Caco-2 (cell line): ENCODE measurements at regions of chr6 and their contacts with region 1.

Region 1: DNA sequence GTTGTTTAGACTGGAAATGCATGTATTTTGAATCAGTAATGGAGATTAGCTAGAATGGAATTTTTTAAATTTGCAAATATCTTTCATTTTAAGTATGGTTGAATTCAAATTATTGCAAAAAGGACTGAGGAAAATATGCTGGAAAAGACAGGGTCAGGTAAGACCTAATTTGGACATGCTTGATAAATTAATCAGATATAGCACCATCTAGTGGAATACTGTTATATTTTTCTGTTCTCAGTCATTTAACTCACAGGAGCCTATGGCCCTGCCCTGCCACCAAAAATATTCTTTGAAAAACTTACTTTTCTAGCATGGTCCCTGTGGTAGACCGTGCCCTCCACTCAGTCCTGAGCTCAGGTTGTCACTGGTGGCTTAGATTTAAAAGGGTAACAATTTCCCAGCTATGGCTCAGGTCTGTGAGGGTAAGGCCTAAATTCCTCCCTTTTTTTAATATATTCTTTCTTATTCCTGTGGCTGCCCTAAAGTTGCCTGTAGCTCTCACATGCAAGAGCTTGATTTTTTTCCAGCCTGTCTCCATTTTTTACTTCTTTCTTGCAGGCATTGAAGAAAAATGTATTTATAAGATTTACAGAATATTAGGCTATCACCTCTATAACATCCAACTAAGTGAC is 25.3 kb upstream of the KIAA1586 start:
- DNase-seq: peak in 1 of 2 experiments; percentile 8
- H3K4me3 ChIP-seq: no peak overlapping the region
- H3K4me3 Mint-ChIP-seq: no peak overlapping the region
- H3K27ac Mint-ChIP-seq: no peak overlapping the region
- H3K4me1 ChIP-seq: no peaks in the 10 kb centered on the region
- H3K4me1 Mint-ChIP-seq: no peaks in the 10 kb centered on the region
- H3K27me3 ChIP-seq: no peaks in the 10 kb centered on the region
- H3K27me3 Mint-ChIP-seq: peaks cover 8% of the 10 kb centered on the region
- CTCF ChIP-seq: peak; percentile 25 to 51

Region 2: DNA sequence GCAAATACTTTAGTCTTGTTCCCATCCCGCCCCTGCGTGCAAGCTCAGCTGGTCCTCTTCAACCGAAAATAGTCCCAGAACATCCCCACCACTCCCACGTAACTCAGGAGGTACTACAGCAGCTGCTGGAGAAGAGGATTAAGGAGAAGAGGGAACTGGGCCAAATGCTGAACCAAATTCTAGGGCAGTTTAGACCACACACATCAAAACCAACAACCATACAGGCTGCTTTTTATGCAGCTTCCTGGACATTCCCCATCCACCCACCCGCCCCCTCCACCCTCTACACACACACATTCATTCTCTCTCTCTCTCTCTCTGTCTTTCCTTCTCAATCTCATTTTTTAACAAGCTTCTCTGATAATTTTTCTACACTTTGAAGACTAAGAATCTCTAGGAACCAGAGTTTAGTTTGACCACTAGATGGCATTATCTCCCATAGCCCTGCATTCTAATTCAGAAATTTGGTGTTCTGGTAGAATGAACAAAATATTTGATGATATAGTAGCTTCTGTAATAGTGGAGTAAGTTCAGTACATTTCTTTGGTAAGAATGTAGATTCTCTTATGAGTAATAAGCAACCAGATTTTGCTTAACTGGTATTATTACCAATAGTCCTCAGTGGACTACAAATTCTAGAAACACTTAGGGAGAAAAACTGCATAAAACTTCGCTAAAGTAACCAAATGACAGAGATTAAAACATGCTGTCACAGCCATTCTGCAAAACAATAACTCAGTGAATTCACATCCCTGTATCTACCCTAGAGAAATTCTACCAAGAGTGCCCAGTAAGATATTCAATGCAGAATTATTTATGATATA is 118.3 kb before region 1 on chr6:
- CTCF ChIA-PET with region 1: interaction called, 4 read pairs
- POLR2A ChIA-PET with region 1: no interaction called
- intact Hi-C with region 1: loop called (anchors 1 kb)
- DNase-seq: peak in 1 of 2 experiments; percentile 13
- H3K4me3 ChIP-seq: no peak overlapping the region
- H3K4me3 Mint-ChIP-seq: peak overlapping the region; percentile 0
- H3K27ac Mint-ChIP-seq: no peak overlapping the region
- H3K4me1 ChIP-seq: 0 out of 2 replicates have a peak, but pooled peaks cover 6% of the 10 kb centered on the region
- H3K4me1 Mint-ChIP-seq: peaks cover 22% of the 10 kb centered on the region
- H3K27me3 ChIP-seq: no peaks in the 10 kb centered on the region
- H3K27me3 Mint-ChIP-seq: peaks cover 2% of the 10 kb centered on the region
- CTCF ChIP-seq: peak; percentile 67

Region 3: DNA sequence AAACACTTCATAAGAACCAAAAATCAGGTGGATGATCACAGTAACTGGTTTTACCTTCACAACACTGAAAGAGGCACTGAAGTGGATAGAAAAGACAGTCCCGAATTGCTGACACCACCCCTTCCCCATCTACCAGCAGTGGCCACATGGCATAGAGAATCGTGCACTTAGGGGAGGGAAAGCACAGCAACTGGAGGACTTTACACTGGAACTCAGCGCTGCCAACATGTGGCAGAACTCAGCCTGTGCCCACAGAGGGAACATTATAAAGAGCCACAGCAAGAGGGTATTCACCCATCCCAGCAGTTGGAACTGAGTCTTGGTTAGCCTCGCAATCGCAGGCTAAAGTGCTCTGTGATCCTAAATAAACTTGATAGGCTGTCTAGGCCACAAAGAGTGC is 18.8 kb after region 1 on chr6:
- CTCF ChIA-PET with region 1: no interaction called
- POLR2A ChIA-PET with region 1: no interaction called
- intact Hi-C with region 1: no loop called
- DNase-seq: no peak
- H3K4me3 ChIP-seq: no peak overlapping the region
- H3K4me3 Mint-ChIP-seq: no peak overlapping the region
- H3K27ac Mint-ChIP-seq: no peak overlapping the region
- H3K4me1 ChIP-seq: no peaks in the 10 kb centered on the region
- H3K4me1 Mint-ChIP-seq: no peaks in the 10 kb centered on the region
- H3K27me3 ChIP-seq: no peaks in the 10 kb centered on the region
- H3K27me3 Mint-ChIP-seq: peaks cover 16% of the 10 kb centered on the region
- CTCF ChIP-seq: no peak

Region 4: GRCh38 chr6:57257911-57258541 is 236.8 kb after region 1 on chr6:
- CTCF ChIA-PET with region 1: no interaction called
- POLR2A ChIA-PET with region 1: no interaction called
- intact Hi-C with region 1: loop called (anchors 10 kb)
- DNase-seq: no peak
- H3K4me3 ChIP-seq: no peak overlapping the region
- H3K4me3 Mint-ChIP-seq: no peak overlapping the region
- H3K27ac Mint-ChIP-seq: no peak overlapping the region
- H3K4me1 ChIP-seq: no peaks in the 10 kb centered on the region; the same call in 1 of the 2 replicates
- H3K4me1 Mint-ChIP-seq: peaks cover 9% of the 10 kb centered on the region
- H3K27me3 ChIP-seq: no peaks in the 10 kb centered on the region
- H3K27me3 Mint-ChIP-seq: peaks cover 5% of the 10 kb centered on the region
- CTCF ChIP-seq: no peak